Endothelial cell of umbilical vein (primary cell): ENCODE measurements at regions of chr17 and their contacts with region 1.

Region 1: DNA sequence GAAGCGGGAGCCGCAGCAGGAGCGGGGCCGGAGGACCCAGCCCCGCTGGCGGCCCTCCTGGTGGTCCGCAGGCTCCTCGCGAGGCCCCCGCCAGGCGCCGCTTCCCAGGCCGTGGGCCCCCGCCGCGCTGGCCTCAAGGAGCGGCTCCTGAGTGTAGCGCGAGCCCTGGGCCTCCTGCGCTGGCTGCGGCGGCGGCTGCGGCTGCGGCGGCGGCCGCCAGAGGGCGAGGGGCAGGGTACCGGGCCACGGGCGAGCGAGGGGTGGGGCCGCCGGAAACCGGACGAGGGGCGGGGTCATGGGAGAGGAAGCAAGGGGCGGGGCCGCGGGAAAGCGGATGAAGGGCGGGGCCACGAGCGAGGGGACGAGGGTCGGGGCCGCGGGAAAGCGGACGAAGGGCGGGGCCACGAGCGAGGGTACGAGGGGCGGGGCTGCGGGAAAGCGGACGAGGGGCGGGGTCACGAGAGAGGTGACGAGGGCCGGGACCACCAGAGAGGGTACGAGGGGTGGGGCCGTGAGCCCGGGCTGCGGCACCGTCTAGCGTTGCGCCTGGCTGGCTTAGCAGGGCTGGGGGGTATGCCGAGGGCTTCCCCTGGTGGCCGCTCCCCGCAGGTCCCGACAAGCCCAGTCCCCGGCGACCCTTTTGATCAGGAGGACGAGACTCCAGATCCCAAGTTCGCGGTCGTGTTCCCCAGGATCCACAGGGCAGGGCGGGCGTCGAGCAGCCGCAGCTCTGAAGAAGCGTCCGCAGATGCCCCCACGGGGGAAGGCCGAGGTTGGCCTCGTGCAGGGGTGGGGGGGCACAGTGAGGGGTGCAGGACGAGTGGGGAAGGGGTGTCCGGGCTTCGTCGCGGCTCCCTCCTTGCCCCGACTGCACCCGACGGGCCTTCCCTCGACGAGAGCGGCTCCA is 1.7 kb downstream of the MYO15B start:
- DNase-seq: peak; percentile 74
- H3K4me3 ChIP-seq: peak overlapping the region in 2 of 3 experiments; percentile 48 to 55
- H3K27ac ChIP-seq: peak overlapping the region; percentile 68
- H3K4me1 ChIP-seq: peaks cover 3% of the 10 kb centered on the region
- H3K27me3 ChIP-seq: no peaks in the 10 kb centered on the region
- CTCF ChIP-seq: peak; percentile 38 to 47
- POLR2A ChIP-seq: peak; percentile 42

Region 2: GRCh38 chr17:75524953-75525719 is 64.1 kb before region 1 on chr17 and contains the start of gene LLGL2:
- CTCF ChIA-PET with region 1: interaction called, 3 read pairs
- POLR2A ChIA-PET with region 1: no interaction called
- dilution Hi-C with region 1: no loop called
- intact Hi-C with region 1: loop called (anchors 2 kb)
- DNase-seq: peak; percentile 44
- H3K4me3 ChIP-seq: peak within 1 kb of the TSS; percentile 39 to 57 (median 52)
- H3K27ac ChIP-seq: no peak within 1 kb of the TSS
- H3K4me1 ChIP-seq: peaks cover 7% of the 10 kb centered on the region
- H3K27me3 ChIP-seq: no peaks in the 10 kb centered on the region
- CTCF ChIP-seq: peak; percentile 10 to 44
- POLR2A ChIP-seq: no peak
- total RNA-seq, gene LLGL2: 5.4 and 5.8 TPM in 2 replicates